Activated naive CD4-positive, alpha-beta T cell treated with anti-CD3 and anti-CD28 coated beads for 36 hours (primary cell): ENCODE measurements at regions of chr1 and their contacts with region 1.

Region 1: DNA sequence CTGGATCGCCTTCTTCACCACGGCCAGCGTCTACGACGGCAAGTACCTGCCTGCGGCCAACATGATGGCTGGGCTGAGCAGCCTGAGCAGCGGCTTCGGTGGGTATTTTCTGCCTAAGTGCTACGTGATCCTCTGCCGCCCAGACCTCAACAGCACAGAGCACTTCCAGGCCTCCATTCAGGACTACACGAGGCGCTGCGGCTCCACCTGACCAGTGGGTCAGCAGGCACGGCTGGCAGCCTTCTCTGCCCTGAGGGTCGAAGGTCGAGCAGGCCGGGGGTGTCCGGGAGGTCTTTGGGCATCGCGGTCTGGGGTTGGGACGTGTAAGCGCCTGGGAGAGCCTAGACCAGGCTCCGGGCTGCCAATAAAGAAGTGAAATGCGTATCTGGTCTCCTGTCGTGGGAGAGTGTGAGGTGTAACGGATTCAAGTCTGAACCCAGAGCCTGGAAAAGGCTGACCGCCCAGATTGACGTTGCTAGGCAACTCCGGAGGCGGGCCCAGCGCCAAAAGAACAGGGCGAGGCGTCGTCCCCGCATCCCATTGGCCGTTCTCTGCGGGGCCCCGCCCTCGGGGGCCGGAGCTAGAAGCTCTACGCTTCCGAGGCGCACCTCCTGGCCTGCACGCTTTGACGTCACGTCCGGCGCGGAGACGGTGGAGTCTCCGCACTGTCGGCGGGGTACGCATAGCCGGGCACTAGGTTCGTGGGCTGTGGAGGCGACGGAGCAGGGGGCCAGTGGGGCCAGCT is at the start of gene ZBTB48:
- DNase-seq: peak; percentile 98
- H3K4me3 Mint-ChIP-seq: peak within 1 kb of the TSS; percentile 97
- H3K27ac Mint-ChIP-seq: peak within 1 kb of the TSS; percentile 94
- H3K4me1 Mint-ChIP-seq: peaks cover 34% of the 10 kb centered on the region
- H3K27me3 Mint-ChIP-seq: no peaks in the 10 kb centered on the region
- total RNA-seq, gene ZBTB48: 15.0 to 18.3 TPM

Region 2: DNA sequence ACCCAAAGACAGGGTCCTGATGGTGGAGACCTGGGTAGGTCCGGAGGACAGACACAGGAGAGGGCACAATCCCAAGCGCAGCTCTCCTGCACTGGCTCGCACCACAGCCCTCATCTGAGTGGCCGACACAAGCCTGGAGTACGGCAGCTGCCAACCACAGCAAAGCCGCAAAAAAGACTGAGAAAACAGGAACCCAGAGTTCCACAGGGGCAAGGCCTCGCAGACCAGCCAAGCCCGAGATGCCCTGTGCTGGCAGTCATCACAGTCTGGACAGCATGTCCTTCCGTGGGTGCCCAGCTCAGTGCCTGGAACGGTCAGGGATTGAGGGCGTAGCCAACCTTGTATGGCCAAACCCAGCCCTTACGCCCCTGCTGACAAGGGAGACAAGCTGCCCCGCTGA is 11.7 kb after region 1 on chr1:
- CTCF ChIA-PET with region 1: no interaction called
- intact Hi-C with region 1: no loop called
- DNase-seq: no peak
- H3K4me3 Mint-ChIP-seq: no peak overlapping the region
- H3K27ac Mint-ChIP-seq: peak overlapping the region; percentile 53
- H3K4me1 Mint-ChIP-seq: peaks cover 26% of the 10 kb centered on the region
- H3K27me3 Mint-ChIP-seq: no peaks in the 10 kb centered on the region

Region 3: DNA sequence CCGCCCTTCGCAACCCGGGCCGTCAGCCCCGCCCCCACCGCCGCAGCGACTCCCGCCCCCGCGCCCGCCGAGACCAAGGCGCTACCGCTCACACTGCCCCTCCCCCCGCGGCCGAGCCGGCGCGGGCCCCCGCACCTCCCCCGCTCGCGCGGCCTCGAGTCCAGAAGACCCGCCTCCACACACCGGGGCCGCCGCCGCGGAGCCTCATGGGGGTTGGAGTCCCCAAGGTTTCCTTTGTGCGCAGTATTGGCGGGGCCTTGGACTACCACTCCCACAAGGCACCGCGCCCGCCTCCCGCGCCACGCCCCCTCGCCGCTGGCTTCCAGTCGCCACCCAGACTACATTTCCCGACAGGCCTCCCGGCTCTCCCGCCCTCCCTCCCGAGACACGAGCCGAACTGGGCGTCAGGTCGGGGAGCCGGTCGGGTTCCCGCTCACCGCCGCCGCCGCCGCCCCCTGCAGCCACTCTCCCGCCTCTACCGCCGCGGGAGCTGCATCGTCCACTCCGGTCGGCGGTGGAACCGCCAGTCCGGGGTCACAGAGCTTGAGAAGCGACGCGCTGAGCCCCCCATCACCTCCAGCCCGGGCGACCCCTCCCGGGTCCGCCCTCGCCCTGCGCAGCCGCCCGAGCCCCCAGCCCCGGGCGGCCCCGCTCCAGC is 33.9 kb after region 1 on chr1 and contains the start of gene PHF13:
- CTCF ChIA-PET with region 1: no interaction called
- intact Hi-C with region 1: loop called (anchors 1 kb)
- DNase-seq: peak; percentile 100
- H3K4me3 Mint-ChIP-seq: peak within 1 kb of the TSS; percentile 87
- H3K27ac Mint-ChIP-seq: peak within 1 kb of the TSS; percentile 81
- H3K4me1 Mint-ChIP-seq: peaks cover 17% of the 10 kb centered on the region
- H3K27me3 Mint-ChIP-seq: no peaks in the 10 kb centered on the region
- total RNA-seq, gene PHF13: 10.8 to 11.3 TPM